PC-9 (cell line): ENCODE measurements at regions of chr6 and their contacts with region 1.

Region 1: DNA sequence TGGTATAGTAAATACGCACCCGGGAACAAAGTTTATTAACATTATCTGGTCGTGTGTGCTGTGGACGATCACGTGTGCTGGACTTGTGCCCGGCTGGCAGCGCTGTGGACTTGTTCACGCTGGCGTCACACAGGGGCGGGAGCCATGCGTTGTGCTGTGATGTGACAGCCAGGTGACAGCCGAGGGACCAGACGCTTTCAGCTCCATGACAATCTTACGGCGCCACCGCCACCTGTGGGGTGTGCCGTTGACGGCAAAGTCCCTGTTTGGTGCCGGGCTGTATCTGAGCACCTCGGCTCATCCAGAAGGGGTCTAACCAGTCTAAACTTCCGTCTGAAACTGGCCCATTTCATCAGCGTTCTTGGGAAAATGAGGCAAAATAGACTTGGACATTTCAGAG is 25.2 kb downstream of the DLL1 start:
- DNase-seq: no peak
- H3K4me3 ChIP-seq: no peak overlapping the region
- H3K27ac ChIP-seq: no peak overlapping the region
- H3K4me1 ChIP-seq: no peaks in the 10 kb centered on the region
- H3K27me3 ChIP-seq: peaks cover 76% of the 10 kb centered on the region
- CTCF ChIP-seq: no peak

Region 2: DNA sequence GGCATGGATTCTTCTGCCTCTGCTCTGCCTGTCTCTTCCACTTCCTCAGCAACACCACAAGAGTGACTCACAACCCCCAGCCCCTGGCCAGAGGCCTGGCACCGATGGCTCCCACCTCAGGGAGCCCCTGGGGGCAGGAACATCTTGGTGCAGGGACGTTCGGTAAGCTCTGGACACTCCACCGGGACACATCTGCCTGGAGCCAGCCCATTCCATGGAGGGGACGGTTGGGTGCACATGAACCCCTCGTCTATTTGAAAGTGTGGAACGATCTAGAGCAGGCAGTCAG is 267.8 kb before region 1 on chr6:
- CTCF ChIA-PET with region 1: no interaction called
- POLR2A ChIA-PET with region 1: interaction called, 11 read pairs
- intact Hi-C with region 1: no loop called
- DNase-seq: no peak
- H3K4me3 ChIP-seq: no peak overlapping the region
- H3K27ac ChIP-seq: no peak overlapping the region
- H3K4me1 ChIP-seq: no peaks in the 10 kb centered on the region
- H3K27me3 ChIP-seq: peaks cover 38% of the 10 kb centered on the region
- CTCF ChIP-seq: no peak

Region 3: GRCh38 chr6:170147051-170147787 is 118.4 kb before region 1 on chr6:
- CTCF ChIA-PET with region 1: no interaction called
- POLR2A ChIA-PET with region 1: no interaction called
- intact Hi-C with region 1: no loop called
- DNase-seq: no peak
- H3K4me3 ChIP-seq: no peak overlapping the region
- H3K27ac ChIP-seq: no peak overlapping the region
- H3K4me1 ChIP-seq: no peaks in the 10 kb centered on the region
- H3K27me3 ChIP-seq: peaks cover 65% of the 10 kb centered on the region
- CTCF ChIP-seq: no peak